ENCODE measurements at regions of chr3 and their contacts with region 1.

Region 1: GRCh38 chr3:160163229-160163878 is 61.9 kb upstream of the C3orf80 start:
- DNase-seq: peak; percentile 48
- H3K4me3 ChIP-seq: no peak overlapping the region
- H3K27ac ChIP-seq: no peak overlapping the region
- H3K4me1 ChIP-seq: no peaks in the 10 kb centered on the region
- H3K27me3 ChIP-seq: peaks cover 4% of the 10 kb centered on the region
- CTCF ChIP-seq: peak; percentile 64

Region 2: GRCh38 chr3:160210799-160211221 is 47.5 kb after region 1 on chr3:
- CTCF ChIA-PET with region 1: no interaction called
- POLR2A ChIA-PET with region 1: no interaction called
- intact Hi-C with region 1: loop called (anchors 2 kb)
- DNase-seq: peak; percentile 72
- H3K4me3 ChIP-seq: no peak overlapping the region
- H3K27ac ChIP-seq: no peak overlapping the region
- H3K4me1 ChIP-seq: peaks cover 5% of the 10 kb centered on the region
- H3K27me3 ChIP-seq: peaks cover 7% of the 10 kb centered on the region
- CTCF ChIP-seq: peak; percentile 55

Region 3: DNA sequence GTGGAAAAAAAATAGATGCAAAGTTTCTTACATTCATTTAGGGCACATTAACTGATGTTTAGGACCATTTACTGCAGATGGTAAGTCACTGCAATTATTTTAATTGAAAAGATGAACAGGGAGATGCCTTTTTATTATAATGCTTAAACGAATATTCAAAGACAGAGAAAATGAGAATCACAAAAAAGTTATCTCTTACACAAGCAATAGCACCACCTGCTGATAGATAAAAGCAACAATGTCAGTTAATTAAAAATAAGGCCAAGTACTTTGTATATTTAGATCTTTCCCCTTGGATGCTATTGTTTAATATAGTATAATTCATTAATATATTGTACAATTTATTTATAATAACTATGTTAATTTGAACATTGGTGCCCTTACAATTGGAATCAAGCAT is 179.8 kb after region 1 on chr3:
- CTCF ChIA-PET with region 1: interaction called, 7 read pairs
- POLR2A ChIA-PET with region 1: no interaction called
- intact Hi-C with region 1: loop called (anchors 1 kb)
- DNase-seq: peak; percentile 48
- H3K4me3 ChIP-seq: no peak overlapping the region
- H3K27ac ChIP-seq: no peak overlapping the region
- H3K4me1 ChIP-seq: no peaks in the 10 kb centered on the region
- H3K27me3 ChIP-seq: no peaks in the 10 kb centered on the region
- CTCF ChIP-seq: peak; percentile 57

Region 4: GRCh38 chr3:160365869-160366522 is 202.6 kb after region 1 on chr3:
- CTCF ChIA-PET with region 1: no interaction called
- POLR2A ChIA-PET with region 1: no interaction called
- intact Hi-C with region 1: no loop called
- DNase-seq: no peak
- H3K4me3 ChIP-seq: no peak overlapping the region
- H3K27ac ChIP-seq: no peak overlapping the region
- H3K4me1 ChIP-seq: no peaks in the 10 kb centered on the region
- H3K27me3 ChIP-seq: no peaks in the 10 kb centered on the region
- CTCF ChIP-seq: no peak

Region 5: GRCh38 chr3:160413613-160414248 is 250.4 kb after region 1 on chr3:
- CTCF ChIA-PET with region 1: no interaction called
- POLR2A ChIA-PET with region 1: no interaction called
- intact Hi-C with region 1: loop called (anchors 5 kb)
- DNase-seq: peak; percentile 81
- H3K4me3 ChIP-seq: no peak overlapping the region
- H3K27ac ChIP-seq: no peak overlapping the region
- H3K4me1 ChIP-seq: no peaks in the 10 kb centered on the region
- H3K27me3 ChIP-seq: no peaks in the 10 kb centered on the region
- CTCF ChIP-seq: peak; percentile 84

Region 6: DNA sequence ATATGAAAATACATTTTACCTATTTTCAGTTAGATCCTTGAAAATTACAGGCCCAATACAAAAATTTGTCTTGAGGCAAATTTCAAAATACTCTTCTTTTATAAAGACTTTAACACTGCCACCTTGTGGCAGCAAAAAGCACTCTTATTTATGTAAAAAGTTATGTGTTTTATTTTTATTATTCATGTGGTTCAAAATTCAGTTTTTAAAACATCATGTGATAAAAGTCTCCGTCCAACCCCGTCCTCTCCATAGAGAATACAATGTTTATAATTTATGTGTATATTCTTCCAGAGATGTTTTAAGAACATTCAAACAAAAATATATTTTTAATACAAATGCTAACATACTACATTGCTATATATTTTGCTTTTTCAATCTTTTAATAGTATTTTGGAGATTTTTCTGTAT is 323.1 kb after region 1 on chr3:
- CTCF ChIA-PET with region 1: no interaction called
- POLR2A ChIA-PET with region 1: no interaction called
- intact Hi-C with region 1: loop called (anchors 5 kb)
- DNase-seq: peak; percentile 56
- H3K4me3 ChIP-seq: no peak overlapping the region
- H3K27ac ChIP-seq: no peak overlapping the region
- H3K4me1 ChIP-seq: no peaks in the 10 kb centered on the region
- H3K27me3 ChIP-seq: no peaks in the 10 kb centered on the region
- CTCF ChIP-seq: peak; percentile 74